ENCODE measurements at regions of chr5 and their contacts with region 1.

Region 1: DNA sequence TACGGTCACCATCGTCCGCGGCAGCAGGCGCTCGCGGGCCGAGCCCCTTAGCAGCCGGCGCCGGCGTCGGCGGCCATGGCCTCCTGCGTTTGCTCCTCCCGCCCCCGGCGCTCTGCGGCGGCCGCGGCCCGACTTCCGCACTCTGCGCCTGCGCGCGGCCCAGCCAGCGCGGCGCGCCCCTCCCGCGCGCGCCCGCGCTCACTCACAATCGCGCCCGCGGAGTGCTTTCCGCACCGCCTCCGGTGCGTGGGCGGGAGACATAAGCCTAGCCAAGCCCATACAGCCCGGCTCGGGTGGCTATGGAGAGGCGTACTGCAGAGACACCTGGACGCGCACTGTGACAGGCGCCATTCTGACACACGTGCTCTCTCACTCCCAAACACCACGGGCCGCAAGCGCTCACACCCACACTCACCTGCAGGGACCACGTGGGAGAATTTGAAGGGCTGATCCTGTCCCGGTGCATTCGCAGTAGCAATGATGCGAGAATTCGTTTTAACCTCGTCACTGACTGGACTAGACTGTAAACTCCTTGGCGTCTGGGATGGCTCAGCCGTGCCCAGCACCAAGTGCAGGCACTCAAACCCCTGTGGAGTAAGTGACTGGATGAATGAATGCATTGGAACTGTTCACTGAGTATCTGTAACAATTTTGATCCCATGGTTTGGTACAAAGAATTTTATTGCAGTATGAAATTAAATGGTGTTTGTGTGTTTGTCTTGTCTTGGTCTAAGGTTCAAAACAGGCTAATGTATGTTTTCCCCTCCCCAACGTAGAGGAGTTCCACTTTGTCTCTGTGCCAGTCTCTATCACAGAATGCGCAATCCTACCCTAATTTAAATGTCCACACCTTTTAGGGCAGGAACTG is at the start of gene RNF145:
- DNase-seq: peak; percentile 96
- ATAC-seq: peak; percentile 65
- H3K4me3 Mint-ChIP-seq: peak within 1 kb of the TSS; percentile 100
- H3K27ac Mint-ChIP-seq: peak within 1 kb of the TSS; percentile 100
- H3K4me1 Mint-ChIP-seq: peaks cover 38% of the 10 kb centered on the region
- H3K27me3 Mint-ChIP-seq: no peaks in the 10 kb centered on the region
- total RNA-seq, gene RNF145: 81.9 to 87.5 TPM

Region 2: DNA sequence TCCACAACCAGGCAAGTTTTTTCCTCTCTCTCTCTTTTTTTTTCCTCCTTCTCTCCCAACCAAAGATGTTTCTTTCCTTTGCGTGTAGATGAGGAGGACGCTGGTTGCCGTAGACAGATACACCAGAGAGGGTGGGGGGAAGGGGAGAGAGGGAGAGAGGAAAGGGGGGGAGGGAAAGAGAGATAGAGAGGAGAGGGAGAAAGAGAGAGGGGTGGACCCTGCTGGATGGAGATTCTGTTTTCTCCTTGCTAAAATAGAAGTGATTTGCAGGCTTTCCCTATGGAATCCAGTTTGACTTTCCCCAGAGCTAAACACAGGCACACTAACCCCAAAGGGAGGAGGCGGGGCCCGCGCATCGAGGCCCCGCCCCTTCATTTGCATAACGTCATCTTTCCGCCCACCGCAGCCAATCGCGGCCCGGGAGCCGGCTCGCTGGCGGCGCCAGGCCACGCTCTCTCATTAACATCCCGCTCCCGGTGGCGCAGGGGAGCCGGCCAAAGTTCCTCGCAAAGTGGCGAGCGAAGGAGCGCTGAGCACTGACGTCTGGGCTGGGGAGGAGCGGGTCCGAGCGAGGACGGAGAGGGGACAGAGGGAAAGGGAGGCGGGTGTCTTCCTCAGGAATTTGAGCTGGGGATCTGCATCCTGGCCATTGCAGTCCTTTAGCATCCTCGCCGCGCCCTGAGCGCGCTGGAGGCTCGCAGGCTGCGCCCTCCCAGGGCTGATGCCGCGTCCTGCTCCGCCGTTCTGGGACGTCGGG is 109.5 kb before region 1 on chr5:
- CTCF ChIA-PET with region 1: no interaction called
- POLR2A ChIA-PET with region 1: no interaction called
- intact Hi-C with region 1: loop called in 1 of 2 experiments (anchors 2 kb)
- DNase-seq: peak; percentile 91
- ATAC-seq: peak; percentile 87
- H3K4me3 Mint-ChIP-seq: peak overlapping the region; percentile 77
- H3K27ac Mint-ChIP-seq: peak overlapping the region; percentile 53
- H3K4me1 Mint-ChIP-seq: peaks cover 33% of the 10 kb centered on the region
- H3K27me3 Mint-ChIP-seq: peaks cover 56% of the 10 kb centered on the region

Region 3: GRCh38 chr5:159178978-159179377 is 30.7 kb before region 1 on chr5:
- CTCF ChIA-PET with region 1: interaction called, 11 read pairs
- POLR2A ChIA-PET with region 1: interaction called, 7 read pairs
- intact Hi-C with region 1: loop called (anchors 1 kb)
- DNase-seq: peak; percentile 55
- ATAC-seq: peak; percentile 92
- H3K4me3 Mint-ChIP-seq: peak overlapping the region; percentile 46
- H3K27ac Mint-ChIP-seq: peak overlapping the region; percentile 91
- H3K4me1 Mint-ChIP-seq: peaks cover 87% of the 10 kb centered on the region
- H3K27me3 Mint-ChIP-seq: no peaks in the 10 kb centered on the region

Region 4: DNA sequence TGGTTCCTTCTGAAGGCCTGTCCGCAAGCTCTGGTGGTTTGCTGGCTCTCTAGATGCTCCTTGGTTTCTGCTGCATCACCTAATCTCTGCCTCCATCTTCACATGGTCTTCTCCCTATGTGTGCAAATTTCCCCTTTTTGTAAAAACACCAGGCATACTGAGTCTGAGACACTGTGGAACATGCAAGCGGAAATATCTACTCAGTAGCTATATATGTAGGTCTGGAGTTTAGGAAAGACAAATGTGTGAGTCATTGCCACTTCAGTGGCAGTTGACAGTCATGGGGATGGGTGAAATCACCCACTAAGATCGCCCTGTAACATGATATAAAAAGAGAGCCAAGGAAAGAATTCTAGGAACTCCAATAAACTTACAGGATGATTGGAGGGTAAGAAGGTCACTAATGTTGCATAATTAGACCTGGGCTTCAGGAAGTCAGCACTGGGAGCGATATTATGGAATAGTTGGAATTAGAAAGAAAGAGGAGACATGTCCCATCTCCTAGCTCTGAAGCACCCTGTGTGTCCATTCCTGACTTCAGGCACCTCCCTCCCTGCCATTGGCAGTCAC is 30.7 kb after region 1 on chr5:
- CTCF ChIA-PET with region 1: interaction called, 6 read pairs
- POLR2A ChIA-PET with region 1: no interaction called
- intact Hi-C with region 1: loop called (anchors 1 to 5 kb)
- DNase-seq: peak; percentile 25
- ATAC-seq: peak; percentile 84
- H3K4me3 Mint-ChIP-seq: no peak overlapping the region
- H3K27ac Mint-ChIP-seq: peak overlapping the region; percentile 62
- H3K4me1 Mint-ChIP-seq: peaks cover 45% of the 10 kb centered on the region
- H3K27me3 Mint-ChIP-seq: no peaks in the 10 kb centered on the region

Region 5: DNA sequence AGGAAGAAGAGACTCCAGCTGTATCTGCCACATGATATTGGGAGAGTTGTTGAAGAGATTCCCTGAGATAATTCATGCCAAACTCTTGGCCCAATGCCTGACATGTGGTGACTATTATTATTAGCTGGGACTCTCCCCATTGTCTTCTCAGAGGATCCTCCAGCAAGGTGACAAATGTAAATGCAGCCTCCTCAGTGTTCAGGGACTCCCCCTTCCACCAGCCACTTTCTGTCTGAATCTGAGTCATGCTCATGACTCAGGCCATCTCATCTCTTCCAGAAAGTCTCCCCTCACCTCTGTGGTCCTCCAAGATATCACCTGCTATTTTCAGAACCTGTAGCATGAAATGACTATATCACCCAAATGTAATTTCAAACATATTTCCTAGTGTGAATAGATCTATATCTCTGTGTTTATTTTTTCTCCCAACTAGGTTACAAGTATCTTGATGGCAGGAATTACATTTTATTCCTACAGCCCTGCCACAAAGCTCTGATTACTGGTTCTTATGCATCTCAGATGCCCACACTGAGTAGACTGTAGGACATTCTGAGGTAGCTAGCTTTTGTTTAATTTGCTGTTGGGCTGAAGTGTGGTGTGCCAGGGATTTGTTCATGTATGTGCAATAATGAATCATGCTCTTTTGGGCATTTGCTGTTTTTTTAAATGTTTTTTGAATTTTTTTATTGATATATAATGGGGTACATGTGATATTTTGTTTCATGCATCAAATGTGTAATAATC is 247.2 kb after region 1 on chr5:
- CTCF ChIA-PET with region 1: interaction called, 4 read pairs
- POLR2A ChIA-PET with region 1: no interaction called
- intact Hi-C with region 1: loop called (anchors 1 kb)
- DNase-seq: peak; percentile 82
- ATAC-seq: peak; percentile 84
- H3K4me3 Mint-ChIP-seq: no peak overlapping the region
- H3K27ac Mint-ChIP-seq: no peak overlapping the region
- H3K4me1 Mint-ChIP-seq: peaks cover 45% of the 10 kb centered on the region
- H3K27me3 Mint-ChIP-seq: peaks cover 37% of the 10 kb centered on the region

Region 6: DNA sequence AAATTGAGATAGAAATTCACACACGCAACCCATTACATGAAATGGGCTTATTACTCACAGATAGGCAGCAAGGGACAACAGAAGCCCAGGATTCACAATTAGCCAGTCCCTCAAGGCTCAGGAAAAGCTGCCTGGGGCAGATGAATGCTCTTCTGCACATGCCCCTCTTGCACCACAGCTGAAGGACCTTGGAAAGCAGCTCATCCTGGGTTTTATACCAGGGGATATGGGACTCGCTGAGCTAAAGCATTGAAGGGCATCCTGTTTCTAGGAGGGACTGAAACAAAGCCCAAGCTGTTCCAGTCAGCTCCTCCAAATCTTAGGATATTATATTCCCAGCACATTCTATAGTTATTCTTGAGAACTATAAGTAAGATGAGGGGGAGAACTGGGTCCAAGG is 783.5 kb after region 1 on chr5:
- CTCF ChIA-PET with region 1: no interaction called
- POLR2A ChIA-PET with region 1: no interaction called
- intact Hi-C with region 1: no loop called
- DNase-seq: no peak
- ATAC-seq: no peak
- H3K4me3 Mint-ChIP-seq: no peak overlapping the region
- H3K27ac Mint-ChIP-seq: no peak overlapping the region
- H3K4me1 Mint-ChIP-seq: no peaks in the 10 kb centered on the region
- H3K27me3 Mint-ChIP-seq: peaks cover 9% of the 10 kb centered on the region

Region 7: GRCh38 chr5:160418561-160419457 is 1209.1 kb after region 1 on chr5 and contains the start of gene SLU7:
- CTCF ChIA-PET with region 1: no interaction called
- POLR2A ChIA-PET with region 1: no interaction called
- intact Hi-C with region 1: loop called in 1 of 2 experiments (anchors 5 kb)
- DNase-seq: peak; percentile 96
- ATAC-seq: peak; percentile 80
- H3K4me3 Mint-ChIP-seq: peak within 1 kb of the TSS; percentile 96
- H3K27ac Mint-ChIP-seq: peak within 1 kb of the TSS; percentile 99
- H3K4me1 Mint-ChIP-seq: peaks cover 57% of the 10 kb centered on the region
- H3K27me3 Mint-ChIP-seq: no peaks in the 10 kb centered on the region
- total RNA-seq, gene SLU7: 41.1 to 53.0 TPM